ENCODE measurements at regions of chr17 and their contacts with region 1.

Region 1: GRCh38 chr17:3738562-3739295 is 15.0 kb downstream of the HASPIN start:
- DNase-seq: no peak
- ATAC-seq: peak; percentile 43
- H3K4me3 Mint-ChIP-seq: no peak overlapping the region
- H3K27ac Mint-ChIP-seq: peak overlapping the region; percentile 70
- H3K4me1 Mint-ChIP-seq: peaks cover 34% of the 10 kb centered on the region
- H3K27me3 Mint-ChIP-seq: no peaks in the 10 kb centered on the region
- CTCF ChIP-seq: no peak

Region 2: DNA sequence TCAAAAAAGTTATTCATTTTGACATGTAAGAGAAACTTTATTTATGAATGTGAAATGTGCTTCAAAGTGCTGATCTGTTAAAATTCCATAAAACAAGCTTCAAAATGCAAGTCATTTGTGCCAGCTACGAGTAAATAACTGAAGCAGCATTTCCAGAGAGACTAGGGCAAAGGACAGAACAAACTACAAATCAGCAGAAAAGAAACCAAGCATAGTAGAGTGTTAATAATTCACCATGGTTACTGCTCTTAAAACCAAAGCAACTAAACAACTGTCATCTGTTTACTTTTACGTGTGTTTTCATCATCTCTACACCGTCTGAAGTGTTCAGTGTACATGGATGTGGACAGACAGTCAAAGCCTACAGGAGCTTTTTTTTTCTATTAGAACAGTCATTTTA is 264.5 kb before region 1 on chr17:
- CTCF ChIA-PET with region 1: no interaction called
- POLR2A ChIA-PET with region 1: no interaction called
- intact Hi-C with region 1: no loop called
- DNase-seq: no peak
- ATAC-seq: no peak
- H3K4me3 Mint-ChIP-seq: no peak overlapping the region
- H3K27ac Mint-ChIP-seq: no peak overlapping the region
- H3K4me1 Mint-ChIP-seq: peaks cover 2% of the 10 kb centered on the region
- H3K27me3 Mint-ChIP-seq: peaks cover 15% of the 10 kb centered on the region
- CTCF ChIP-seq: no peak

Region 3: GRCh38 chr17:3683054-3683511 is 55.6 kb before region 1 on chr17:
- CTCF ChIA-PET with region 1: interaction called, 37 read pairs
- POLR2A ChIA-PET with region 1: interaction called, 14 read pairs
- intact Hi-C with region 1: loop called (anchors 1 kb)
- DNase-seq: peak; percentile 58
- ATAC-seq: peak; percentile 75
- H3K4me3 Mint-ChIP-seq: peak overlapping the region; percentile 58
- H3K27ac Mint-ChIP-seq: peak overlapping the region; percentile 83
- H3K4me1 Mint-ChIP-seq: peaks cover 46% of the 10 kb centered on the region
- H3K27me3 Mint-ChIP-seq: no peaks in the 10 kb centered on the region
- CTCF ChIP-seq: peak; percentile 72

Region 4: DNA sequence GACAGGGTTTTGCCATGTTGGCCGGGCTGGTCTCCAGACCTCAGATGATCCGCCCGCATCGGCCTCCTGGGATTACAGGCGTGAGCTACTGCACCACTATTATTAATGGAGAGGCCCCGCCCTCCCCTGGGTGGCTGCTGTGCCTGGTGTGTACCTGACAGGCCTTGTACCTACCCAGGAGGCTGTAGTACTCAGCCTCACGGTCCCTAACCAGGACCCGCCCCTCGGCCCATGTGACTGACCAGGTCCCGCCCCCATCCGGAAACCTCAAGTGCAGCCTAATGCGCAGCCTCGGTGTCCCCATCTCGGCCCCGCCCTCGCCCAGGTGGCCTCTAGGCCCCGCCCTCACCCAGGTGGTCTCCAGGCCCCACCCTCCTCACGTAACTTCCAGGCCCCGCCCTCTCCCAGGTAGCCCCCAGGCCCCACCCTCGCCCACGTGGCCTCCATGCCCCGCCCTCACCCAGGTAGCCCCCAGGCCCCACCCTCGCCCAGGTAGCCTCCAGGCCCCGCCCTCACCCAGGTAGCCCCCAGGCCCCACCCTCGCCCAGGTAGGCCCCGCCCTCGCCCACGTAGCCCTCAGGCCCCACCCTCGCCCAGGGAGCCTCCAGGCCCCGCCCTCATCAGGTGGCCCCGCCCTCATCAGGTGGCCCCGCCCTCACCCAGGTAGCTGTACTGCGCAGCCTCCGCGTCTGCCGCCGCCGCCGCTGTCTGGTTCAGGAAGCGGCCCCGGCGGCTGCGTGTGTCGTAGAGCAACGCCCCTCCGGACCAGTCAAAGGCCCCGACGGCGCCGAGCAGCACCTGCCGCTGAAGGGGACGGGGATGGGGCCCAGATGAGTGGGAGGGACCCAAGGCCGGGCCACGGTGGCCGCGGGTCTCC is 16.0 kb after region 1 on chr17:
- CTCF ChIA-PET with region 1: interaction called, 13 read pairs
- POLR2A ChIA-PET with region 1: interaction called, 5 read pairs
- intact Hi-C with region 1: no loop called
- DNase-seq: peak; percentile 65
- ATAC-seq: peak; percentile 97
- H3K4me3 Mint-ChIP-seq: peak overlapping the region; percentile 53
- H3K27ac Mint-ChIP-seq: no peak overlapping the region
- H3K4me1 Mint-ChIP-seq: peaks cover 21% of the 10 kb centered on the region
- H3K27me3 Mint-ChIP-seq: no peaks in the 10 kb centered on the region
- CTCF ChIP-seq: no peak

Region 5: DNA sequence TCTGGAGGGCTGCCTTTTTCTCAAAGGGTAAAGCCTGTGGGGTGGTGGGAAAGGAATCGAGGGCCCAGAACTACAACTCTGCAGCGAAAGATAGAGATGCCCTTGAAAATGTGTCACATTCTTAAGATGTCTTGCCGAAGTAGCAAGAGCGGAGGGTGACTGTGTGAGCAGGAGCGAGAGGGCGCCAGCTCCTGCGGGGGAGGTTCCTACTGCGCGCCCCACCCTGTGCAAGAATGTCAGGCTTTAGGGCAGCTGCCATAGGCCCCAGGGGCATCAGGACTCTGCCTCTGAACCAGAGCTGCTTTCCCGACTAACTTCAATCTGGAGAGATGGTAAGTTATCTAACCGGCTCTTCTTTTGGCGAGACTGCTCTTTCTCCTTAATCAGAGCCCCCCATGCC is 74.0 kb after region 1 on chr17:
- CTCF ChIA-PET with region 1: interaction called, 32 read pairs
- POLR2A ChIA-PET with region 1: interaction called, 7 read pairs
- intact Hi-C with region 1: no loop called
- DNase-seq: no peak
- ATAC-seq: no peak
- H3K4me3 Mint-ChIP-seq: no peak overlapping the region
- H3K27ac Mint-ChIP-seq: no peak overlapping the region
- H3K4me1 Mint-ChIP-seq: peaks cover 47% of the 10 kb centered on the region
- H3K27me3 Mint-ChIP-seq: no peaks in the 10 kb centered on the region
- CTCF ChIP-seq: no peak

Region 6: DNA sequence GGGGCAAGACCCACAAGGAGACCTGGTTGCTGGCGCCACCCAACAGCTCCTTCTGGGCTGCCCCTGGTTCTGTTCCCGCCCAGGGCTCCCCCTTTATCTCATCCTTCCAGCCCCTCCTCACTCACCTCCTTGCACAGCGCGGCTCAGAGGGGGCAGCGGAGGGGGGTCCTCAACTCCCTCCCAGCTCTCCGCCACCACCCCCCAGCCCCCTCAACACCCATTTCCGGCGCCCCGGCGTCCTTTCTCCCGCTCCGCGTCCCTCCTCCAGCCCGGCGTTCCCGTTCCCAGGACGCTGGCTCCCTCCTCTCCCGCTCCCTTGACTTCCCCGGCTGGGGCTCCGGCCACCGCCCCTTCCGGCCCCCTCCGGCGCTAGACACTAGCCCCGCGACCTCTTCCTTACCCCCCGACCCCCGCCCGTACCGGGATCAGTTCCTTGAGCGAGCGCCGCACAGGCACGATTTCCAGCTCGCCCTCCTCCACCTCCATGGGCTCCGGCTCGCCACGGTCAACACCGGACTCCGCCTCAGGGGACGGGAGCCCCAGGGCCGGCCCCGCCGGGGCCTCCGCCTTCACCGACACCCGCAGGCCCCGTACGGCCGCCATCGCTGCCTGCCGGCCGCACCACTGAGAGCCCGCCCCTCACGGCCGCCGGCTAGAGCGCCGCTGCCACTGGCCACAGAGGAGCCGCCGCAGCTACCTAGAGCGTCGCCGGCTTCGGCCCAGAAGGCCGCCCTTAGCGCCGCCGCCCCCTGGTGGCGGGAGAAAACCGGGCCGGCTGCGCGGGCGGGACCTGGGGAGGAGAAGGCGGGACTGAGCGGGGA is 107.1 kb after region 1 on chr17 and contains the start of gene NCBP3:
- CTCF ChIA-PET with region 1: interaction called, 35 read pairs
- POLR2A ChIA-PET with region 1: interaction called, 8 read pairs
- intact Hi-C with region 1: loop called (anchors 1 kb)
- DNase-seq: peak; percentile 92
- ATAC-seq: peak; percentile 96
- H3K4me3 Mint-ChIP-seq: peak within 1 kb of the TSS; percentile 92
- H3K27ac Mint-ChIP-seq: peak within 1 kb of the TSS; percentile 83
- H3K4me1 Mint-ChIP-seq: peaks cover 21% of the 10 kb centered on the region
- H3K27me3 Mint-ChIP-seq: peaks cover 2% of the 10 kb centered on the region
- CTCF ChIP-seq: no peak
- total RNA-seq, gene NCBP3: 49.5 TPM in 2 replicates

Measured in activated B cell treated with CpG ODN at 0.5 μM for 24 hours (primary cell).